GM10248 (cell line): ENCODE measurements at regions of chr19 and their contacts with region 1.

Region 1: GRCh38 chr19:17260842-17261325 is 3.7 kb downstream of the USHBP1 start:
- DNase-seq: peak; percentile 94
- CTCF ChIP-seq: peak; percentile 92

Region 2: GRCh38 chr19:17226002-17226933 is 34.6 kb before region 1 on chr19 and contains the start of gene OCEL1:
- CTCF ChIA-PET with region 1: interaction called, 10 read pairs
- POLR2A ChIA-PET with region 1: no interaction called
- DNase-seq: peak; percentile 95
- CTCF ChIP-seq: no peak

Region 3: GRCh38 chr19:17235618-17236377 is 25.1 kb before region 1 on chr19:
- CTCF ChIA-PET with region 1: interaction called, 13 read pairs
- POLR2A ChIA-PET with region 1: no interaction called
- DNase-seq: peak; percentile 79
- CTCF ChIP-seq: peak; percentile 88

Region 4: GRCh38 chr19:17245244-17245984 is 15.5 kb before region 1 on chr19 and contains the start of gene NR2F6:
- CTCF ChIA-PET with region 1: interaction called, 55 read pairs
- POLR2A ChIA-PET with region 1: no interaction called
- DNase-seq: no peak
- CTCF ChIP-seq: no peak

Region 5: DNA sequence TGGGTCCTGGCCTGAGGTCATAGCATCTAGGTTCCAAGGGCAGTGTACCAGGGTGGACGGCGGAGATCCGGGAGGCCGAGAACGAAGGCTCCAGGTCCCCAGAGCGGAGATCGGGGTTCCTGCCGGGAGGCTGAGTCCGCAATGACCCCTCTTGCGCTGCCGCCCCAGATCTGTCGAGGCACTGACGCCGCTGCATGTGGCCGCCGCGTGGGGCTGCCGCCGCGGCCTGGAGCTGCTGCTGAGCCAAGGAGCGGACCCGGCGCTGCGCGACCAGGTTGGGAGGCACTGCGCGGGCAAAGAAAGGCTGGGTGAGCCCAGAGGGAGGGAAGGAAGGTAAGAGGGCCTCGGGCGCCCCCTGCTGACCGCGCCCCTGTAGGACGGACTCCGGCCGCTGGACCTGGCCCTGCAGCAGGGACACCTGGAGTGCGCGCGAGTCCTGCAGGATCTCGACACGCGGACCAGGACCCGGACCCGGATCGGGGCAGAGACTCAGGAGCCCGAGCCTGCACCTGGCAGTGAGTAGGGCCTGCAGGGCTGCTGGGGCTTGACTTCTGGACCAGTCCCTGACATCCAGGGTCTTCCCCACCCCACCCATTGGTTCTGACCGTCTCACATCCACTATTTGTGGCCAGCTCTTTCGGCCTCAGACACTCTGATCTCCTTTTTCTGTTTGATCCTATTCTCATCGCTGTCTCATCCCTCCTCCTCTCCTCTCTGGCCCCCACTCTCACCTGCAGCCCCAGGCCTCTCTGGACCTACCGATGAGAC is 21.8 kb after region 1 on chr19:
- CTCF ChIA-PET with region 1: interaction called, 54 read pairs
- POLR2A ChIA-PET with region 1: interaction called, 4 read pairs
- DNase-seq: peak; percentile 91
- CTCF ChIP-seq: peak; percentile 94

Region 6: GRCh38 chr19:17305517-17306284 is 44.8 kb after region 1 on chr19 and contains the start of gene MRPL34:
- CTCF ChIA-PET with region 1: interaction called, 11 read pairs
- POLR2A ChIA-PET with region 1: no interaction called
- DNase-seq: peak; percentile 89
- CTCF ChIP-seq: peak; percentile 74

Region 7: DNA sequence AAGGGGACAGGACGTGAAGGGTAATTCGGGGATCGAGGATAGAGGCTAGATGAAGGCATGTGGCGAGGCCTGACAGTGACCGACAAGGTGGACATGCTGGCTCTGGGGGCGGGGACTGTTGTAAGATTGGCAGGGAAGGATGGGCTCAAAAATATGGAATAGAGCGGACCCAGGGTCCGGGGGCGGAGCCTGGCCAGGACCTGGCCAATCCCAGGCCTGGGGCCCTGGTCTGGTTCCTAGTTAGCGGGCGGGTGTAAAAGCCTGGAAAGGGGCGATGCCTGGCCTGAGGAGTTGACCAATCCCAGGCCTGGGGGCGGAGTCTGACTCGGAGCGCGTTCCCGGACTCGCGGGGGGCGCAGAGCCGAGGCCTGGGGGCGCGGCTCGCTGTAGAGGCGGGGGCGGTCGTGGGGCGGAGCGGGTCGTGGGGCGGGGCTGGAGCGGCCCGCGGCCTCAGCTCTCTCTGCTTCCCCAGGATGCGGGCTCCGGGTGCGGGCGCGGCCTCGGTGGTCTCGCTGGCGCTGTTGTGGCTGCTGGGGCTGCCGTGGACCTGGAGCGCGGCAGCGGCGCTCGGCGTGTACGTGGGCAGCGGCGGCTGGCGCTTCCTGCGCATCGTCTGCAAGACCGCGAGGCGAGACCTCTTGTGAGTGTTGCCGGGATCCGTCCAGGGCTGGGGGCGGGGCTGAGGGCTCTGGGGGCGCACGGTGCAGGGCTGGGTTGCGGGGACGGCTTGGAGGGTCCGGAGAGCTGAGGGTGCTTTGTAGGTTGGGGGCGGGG is 209.4 kb after region 1 on chr19 and contains the start of gene SLC27A1:
- CTCF ChIA-PET with region 1: interaction called, 12 read pairs
- POLR2A ChIA-PET with region 1: no interaction called
- DNase-seq: peak; percentile 93
- CTCF ChIP-seq: no peak